ENCODE measurements at regions of chrX and their contacts with region 1.

Region 1: DNA sequence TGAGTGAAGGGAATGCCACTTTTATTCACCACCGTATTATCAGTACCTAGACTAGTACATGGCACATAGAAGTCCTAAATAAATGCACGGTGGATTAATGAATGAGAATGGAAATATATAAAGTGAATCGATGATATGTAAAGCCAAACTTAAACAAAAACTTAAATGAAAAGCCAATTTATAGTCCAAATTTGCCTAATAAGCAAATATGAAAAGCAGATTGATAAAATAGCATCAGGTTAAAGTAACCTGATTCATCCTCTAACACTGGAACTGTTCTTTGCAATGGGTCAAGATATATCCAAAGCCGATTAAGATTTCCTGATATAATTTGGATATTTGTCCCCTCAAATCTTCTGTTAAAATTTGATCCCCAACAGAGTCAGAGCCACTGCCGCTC is 66.9 kb upstream of the MAGEB10 start:
- DNase-seq: no peak
- ATAC-seq: no peak
- H3K4me3 ChIP-seq: no peak overlapping the region
- H3K27ac ChIP-seq: no peak overlapping the region
- H3K4me1 ChIP-seq: no peaks in the 10 kb centered on the region
- H3K27me3 ChIP-seq: no peaks in the 10 kb centered on the region
- CTCF ChIP-seq: no peak
- EP300 ChIP-seq: no peak
- POLR2A ChIP-seq: no peak
- RAD21 ChIP-seq: no peak

Region 2: GRCh38 chrX:27903960-27904359 is 163.0 kb after region 1 on chrX:
- CTCF ChIA-PET with region 1: no interaction called
- POLR2A ChIA-PET with region 1: no interaction called
- in situ Hi-C with region 1: no loop called
- intact Hi-C with region 1: loop called (anchors 5 kb)
- DNase-seq: no peak
- ATAC-seq: no peak
- H3K4me3 ChIP-seq: no peak overlapping the region
- H3K27ac ChIP-seq: no peak overlapping the region
- H3K4me1 ChIP-seq: no peaks in the 10 kb centered on the region
- H3K27me3 ChIP-seq: no peaks in the 10 kb centered on the region
- CTCF ChIP-seq: no peak
- EP300 ChIP-seq: no peak
- POLR2A ChIP-seq: no peak
- RAD21 ChIP-seq: no peak

Region 3: DNA sequence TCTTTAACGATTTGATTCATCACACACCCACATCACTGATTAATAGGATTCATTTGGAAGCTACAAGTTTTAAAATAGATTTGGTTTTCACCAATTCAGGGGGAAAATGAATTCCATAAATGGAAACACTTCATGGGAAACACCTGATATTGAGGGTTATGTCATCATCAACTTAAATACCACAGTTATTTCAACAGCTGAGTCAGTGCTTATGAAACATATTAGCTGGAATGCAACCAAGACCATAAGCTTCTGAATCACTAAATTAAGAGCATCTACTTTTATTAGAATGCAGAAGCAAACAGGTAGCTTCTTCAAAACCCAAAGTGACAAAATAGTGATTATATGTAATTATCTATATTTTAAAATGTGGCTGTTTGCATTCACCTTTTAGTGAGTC is 448.1 kb after region 1 on chrX:
- CTCF ChIA-PET with region 1: no interaction called
- POLR2A ChIA-PET with region 1: no interaction called
- in situ Hi-C with region 1: no loop called
- intact Hi-C with region 1: no loop called
- DNase-seq: no peak
- ATAC-seq: no peak
- H3K4me3 ChIP-seq: no peak overlapping the region
- H3K27ac ChIP-seq: no peak overlapping the region
- H3K4me1 ChIP-seq: no peaks in the 10 kb centered on the region
- H3K27me3 ChIP-seq: no peaks in the 10 kb centered on the region
- CTCF ChIP-seq: no peak
- EP300 ChIP-seq: no peak
- POLR2A ChIP-seq: no peak
- RAD21 ChIP-seq: no peak

Measured in K562 (cell line).